ENCODE measurements at regions of chr12 and their contacts with region 1.

Region 1: GRCh38 chr12:51871126-51871525 is 16.8 kb upstream of the ANKRD33 start:
- DNase-seq: no peak
- ATAC-seq: no peak
- H3K4me3 Mint-ChIP-seq: no peak overlapping the region
- H3K27ac Mint-ChIP-seq: no peak overlapping the region
- H3K4me1 Mint-ChIP-seq: peaks cover 10% of the 10 kb centered on the region
- H3K27me3 Mint-ChIP-seq: peaks cover 46% of the 10 kb centered on the region
- CTCF ChIP-seq: no peak

Region 2: DNA sequence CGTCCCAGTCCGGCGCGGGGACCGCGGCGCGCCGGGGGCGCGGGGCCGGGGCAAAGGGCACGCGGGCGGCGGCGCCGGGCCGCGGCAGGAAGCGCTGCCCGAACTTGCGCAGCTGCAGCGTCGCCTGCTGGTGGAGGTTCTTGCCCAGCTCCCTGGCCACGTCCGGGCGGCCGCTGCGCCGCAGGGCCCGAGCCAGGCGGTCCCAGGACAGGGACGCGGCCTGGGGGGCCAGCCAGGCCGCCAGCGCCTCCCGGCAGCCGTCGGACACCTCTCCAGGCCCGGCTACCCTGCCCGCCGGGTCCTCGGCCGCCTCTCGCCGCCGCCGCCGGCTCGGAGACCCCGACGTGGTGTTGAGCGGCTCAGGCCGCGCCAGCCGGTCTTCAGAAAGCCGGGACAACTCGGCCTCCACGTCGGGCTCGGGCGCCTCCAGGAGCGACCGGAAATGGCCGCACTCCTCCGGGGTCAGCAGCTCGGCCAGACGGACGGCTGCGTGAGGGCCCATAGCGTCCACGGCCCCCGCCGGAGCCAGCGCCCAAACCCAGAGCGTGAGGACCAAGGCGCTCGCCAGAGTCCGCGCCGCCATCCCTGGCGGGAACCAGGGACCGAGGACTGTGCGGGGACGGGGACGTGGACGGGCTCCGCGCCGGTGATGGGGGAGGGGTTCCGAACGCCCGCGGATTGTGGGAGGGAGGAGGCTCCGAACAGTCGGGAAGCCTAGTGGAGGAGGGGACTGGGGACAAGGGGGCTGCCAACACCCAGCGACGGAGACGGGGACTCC is 56.6 kb before region 1 on chr12:
- CTCF ChIA-PET with region 1: interaction called, 6 read pairs
- POLR2A ChIA-PET with region 1: no interaction called
- intact Hi-C with region 1: loop called (anchors 5 kb)
- DNase-seq: peak; percentile 64
- ATAC-seq: peak; percentile 88
- H3K4me3 Mint-ChIP-seq: peak overlapping the region; percentile 66
- H3K27ac Mint-ChIP-seq: no peak overlapping the region
- H3K4me1 Mint-ChIP-seq: peaks cover 5% of the 10 kb centered on the region
- H3K27me3 Mint-ChIP-seq: peaks cover 42% of the 10 kb centered on the region
- CTCF ChIP-seq: no peak

Region 3: DNA sequence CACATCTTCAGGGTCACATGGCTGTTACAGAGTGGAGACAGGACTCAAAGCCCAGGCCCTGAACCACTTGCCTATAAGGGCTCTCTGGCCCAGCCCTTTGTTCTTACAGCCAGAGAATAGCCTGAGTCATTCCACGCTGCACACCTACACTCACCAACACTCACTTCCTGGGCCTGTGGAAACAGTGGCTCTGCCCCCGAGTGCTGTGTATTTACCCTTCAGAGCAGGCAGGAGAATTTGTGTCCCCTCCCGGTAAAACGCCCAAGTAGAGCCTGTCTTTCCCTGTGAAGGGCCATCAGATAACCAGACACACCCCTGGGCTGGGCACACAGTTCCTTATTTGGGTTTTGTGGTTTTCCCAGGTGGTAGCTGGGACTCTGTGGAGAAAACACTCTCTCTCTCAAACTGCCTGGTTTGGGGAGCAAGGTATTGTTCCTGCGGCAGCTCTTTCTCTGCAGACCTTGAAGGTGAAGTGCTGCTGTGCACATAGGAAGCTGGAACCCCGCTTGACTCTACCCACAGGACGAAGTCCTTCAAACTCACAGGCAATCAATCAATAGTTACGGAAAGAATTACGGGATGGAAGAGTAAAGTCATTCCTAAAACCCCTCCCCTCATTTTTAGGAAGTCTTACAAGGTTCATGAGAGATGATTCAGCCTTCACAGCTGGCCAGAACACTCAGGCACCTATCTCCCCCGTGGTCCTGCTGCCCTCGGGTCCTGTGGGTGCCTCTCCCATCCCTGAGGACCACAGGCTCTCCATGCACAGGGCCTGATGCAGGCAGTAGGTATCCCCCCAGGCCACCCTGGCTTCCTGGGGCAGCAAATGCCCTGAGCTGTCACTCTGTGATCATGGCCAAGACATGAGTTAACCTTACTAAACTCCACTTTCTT is 43.0 kb before region 1 on chr12:
- CTCF ChIA-PET with region 1: no interaction called
- POLR2A ChIA-PET with region 1: no interaction called
- intact Hi-C with region 1: no loop called
- DNase-seq: no peak
- ATAC-seq: peak; percentile 34
- H3K4me3 Mint-ChIP-seq: no peak overlapping the region
- H3K27ac Mint-ChIP-seq: no peak overlapping the region
- H3K4me1 Mint-ChIP-seq: peaks cover 17% of the 10 kb centered on the region
- H3K27me3 Mint-ChIP-seq: peaks cover 32% of the 10 kb centered on the region
- CTCF ChIP-seq: no peak

Region 4: GRCh38 chr12:51970904-51971646 is 99.9 kb after region 1 on chr12:
- CTCF ChIA-PET with region 1: no interaction called
- POLR2A ChIA-PET with region 1: no interaction called
- intact Hi-C with region 1: loop called (anchors 10 kb)
- DNase-seq: peak; percentile 23
- ATAC-seq: peak; percentile 85
- H3K4me3 Mint-ChIP-seq: peak overlapping the region; percentile 69
- H3K27ac Mint-ChIP-seq: peak overlapping the region; percentile 63
- H3K4me1 Mint-ChIP-seq: peaks cover 54% of the 10 kb centered on the region
- H3K27me3 Mint-ChIP-seq: no peaks in the 10 kb centered on the region
- CTCF ChIP-seq: no peak